ENCODE measurements at regions of chr11 and their contacts with region 1.

Region 1: GRCh38 chr11:5204787-5205186 is 4.3 kb upstream of the OR51V1 start:
- DNase-seq: no peak
- ATAC-seq: peak; percentile 87
- H3K4me3 ChIP-seq: no peak overlapping the region
- H3K27ac ChIP-seq: no peak overlapping the region
- H3K4me1 ChIP-seq: no peaks in the 10 kb centered on the region
- H3K27me3 ChIP-seq: no peaks in the 10 kb centered on the region
- CTCF ChIP-seq: peak; percentile 34 to 60 (median 40); a peak in 4 of 6 replicates
- EP300 ChIP-seq: no peak
- POLR2A ChIP-seq: no peak
- RAD21 ChIP-seq: peak; percentile 63

Region 2: DNA sequence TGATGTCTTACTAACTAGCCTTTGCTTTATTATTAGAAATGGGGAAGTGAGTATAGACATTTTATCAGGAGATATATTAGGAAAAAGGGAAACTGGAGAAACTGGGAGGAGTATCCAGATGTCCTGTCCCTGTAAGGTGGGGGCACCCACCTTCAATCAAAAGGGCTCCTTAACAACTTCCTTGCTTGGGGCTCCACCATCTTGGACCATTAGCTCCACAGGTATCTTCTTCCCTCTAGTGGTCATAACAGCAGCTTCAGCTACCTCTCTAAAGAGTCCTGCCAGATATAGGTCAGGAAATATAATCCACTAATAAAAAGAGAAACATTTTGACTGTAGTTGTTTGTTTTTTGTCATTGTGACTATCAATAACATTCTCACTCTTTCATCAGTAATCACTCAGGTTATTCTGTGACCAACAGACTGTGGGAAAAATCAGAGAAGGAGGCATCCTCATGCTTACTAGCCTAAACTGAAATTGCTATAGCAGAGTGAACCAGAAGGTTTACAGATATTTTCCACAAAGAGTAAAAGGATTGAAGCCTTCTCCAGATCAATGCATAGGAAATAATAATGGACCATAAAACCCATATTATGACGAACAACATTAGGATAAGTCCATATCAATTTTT is 86.5 kb after region 1 on chr11:
- CTCF ChIA-PET with region 1: interaction called, 4 read pairs
- POLR2A ChIA-PET with region 1: no interaction called
- RAD21 ChIA-PET with region 1: no interaction called
- SMC1A ChIA-PET with region 1: interaction called, 3 read pairs
- in situ Hi-C with region 1: no loop called
- intact Hi-C with region 1: loop called (anchors 1 kb)
- DNase-seq: no peak
- ATAC-seq: peak; percentile 97
- H3K4me3 ChIP-seq: no peak overlapping the region
- H3K27ac ChIP-seq: no peak overlapping the region
- H3K4me1 ChIP-seq: no peaks in the 10 kb centered on the region
- H3K27me3 ChIP-seq: no peaks in the 10 kb centered on the region
- CTCF ChIP-seq: peak; percentile 48 to 57 (median 56)
- EP300 ChIP-seq: no peak
- POLR2A ChIP-seq: no peak
- RAD21 ChIP-seq: peak; percentile 62

Region 3: GRCh38 chr11:5369793-5370192 is 165.0 kb after region 1 on chr11:
- CTCF ChIA-PET with region 1: interaction called, 9 read pairs
- POLR2A ChIA-PET with region 1: no interaction called
- RAD21 ChIA-PET with region 1: no interaction called
- SMC1A ChIA-PET with region 1: interaction called, 4 read pairs
- in situ Hi-C with region 1: loop called (anchors 5 kb)
- intact Hi-C with region 1: no loop called
- DNase-seq: no peak
- ATAC-seq: peak; percentile 83
- H3K4me3 ChIP-seq: no peak overlapping the region
- H3K27ac ChIP-seq: no peak overlapping the region
- H3K4me1 ChIP-seq: no peaks in the 10 kb centered on the region
- H3K27me3 ChIP-seq: no peaks in the 10 kb centered on the region
- CTCF ChIP-seq: peak in 2 of 3 experiments; percentile 22 to 61; a peak in 3 of 6 replicates
- EP300 ChIP-seq: no peak
- POLR2A ChIP-seq: no peak
- RAD21 ChIP-seq: peak; percentile 29

Region 4: DNA sequence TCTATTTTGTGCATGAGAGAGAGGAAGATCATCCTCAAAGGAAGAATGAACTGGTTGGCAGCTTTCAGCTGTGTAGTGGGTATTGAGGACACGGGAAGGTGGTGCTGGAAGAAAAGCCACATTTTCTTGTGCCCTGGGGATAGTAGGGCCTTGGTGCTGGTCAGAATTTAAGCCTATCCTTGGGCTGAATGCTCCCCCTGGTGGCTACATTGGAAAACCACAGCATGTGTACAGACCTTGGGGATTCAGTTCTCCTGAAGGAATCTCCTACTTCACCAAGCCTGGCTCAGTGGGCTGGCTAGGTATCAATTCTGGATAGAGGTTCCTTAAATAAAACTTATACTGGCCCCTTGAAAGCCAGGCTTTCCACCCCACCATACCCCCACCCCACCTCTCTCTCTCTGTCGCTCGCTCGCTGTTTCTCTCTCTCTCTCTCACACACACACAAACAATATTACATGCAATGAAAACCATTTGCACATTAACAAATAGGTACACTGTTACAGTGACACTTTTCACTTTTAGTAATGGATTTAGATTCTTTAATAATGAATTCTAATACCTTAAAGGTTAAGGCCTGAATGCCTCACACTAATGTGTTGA is 176.1 kb after region 1 on chr11:
- CTCF ChIA-PET with region 1: interaction called, 4 read pairs
- POLR2A ChIA-PET with region 1: no interaction called
- RAD21 ChIA-PET with region 1: interaction called, 3 read pairs
- SMC1A ChIA-PET with region 1: no interaction called
- in situ Hi-C with region 1: no loop called
- intact Hi-C with region 1: loop called (anchors 2 kb)
- DNase-seq: no peak
- ATAC-seq: peak; percentile 98
- H3K4me3 ChIP-seq: no peak overlapping the region
- H3K27ac ChIP-seq: no peak overlapping the region
- H3K4me1 ChIP-seq: no peaks in the 10 kb centered on the region
- H3K27me3 ChIP-seq: no peaks in the 10 kb centered on the region
- CTCF ChIP-seq: peak; percentile 71 to 83 (median 80)
- EP300 ChIP-seq: no peak
- POLR2A ChIP-seq: no peak
- RAD21 ChIP-seq: peak; percentile 83

Measured in GM12878 (cell line).